ENCODE measurements at regions of chr9 and their contacts with region 1.

Region 1: GRCh38 chr9:121213136-121213806 is 11.6 kb upstream of the RAB14 start:
- DNase-seq: peak; percentile 74 to 93
- H3K4me3 ChIP-seq: no peak overlapping the region
- H3K27ac ChIP-seq: no peak overlapping the region
- H3K4me1 ChIP-seq: peaks cover 0 to 6% (median 1%) of the 10 kb centered on the region in 4 experiments; a peak in 3 of 7 replicates
- H3K27me3 ChIP-seq: no peaks in the 10 kb centered on the region
- CTCF ChIP-seq: peak; percentile 96 to 98 (median 98)
- EP300 ChIP-seq: no peak
- POLR2A ChIP-seq: no peak
- RAD21 ChIP-seq: peak; percentile 100

Region 2: GRCh38 chr9:121246821-121247561 is 33.7 kb after region 1 on chr9:
- CTCF ChIA-PET with region 1: interaction called, 14 read pairs
- POLR2A ChIA-PET with region 1: no interaction called
- DNase-seq: no peak
- H3K4me3 ChIP-seq: no peak overlapping the region
- H3K27ac ChIP-seq: no peak overlapping the region
- H3K4me1 ChIP-seq: no peaks in the 10 kb centered on the region
- H3K27me3 ChIP-seq: 0 out of 7 replicates have a peak, but pooled peaks cover 0 to under 1% (median 0%) of the 10 kb centered on the region in 4 experiments
- CTCF ChIP-seq: no peak
- EP300 ChIP-seq: no peak
- POLR2A ChIP-seq: no peak
- RAD21 ChIP-seq: no peak

Region 3: GRCh38 chr9:121278535-121279261 is 65.4 kb after region 1 on chr9:
- CTCF ChIA-PET with region 1: interaction called, 43 read pairs
- POLR2A ChIA-PET with region 1: interaction called, 3 read pairs
- DNase-seq: no peak
- H3K4me3 ChIP-seq: no peak overlapping the region
- H3K27ac ChIP-seq: no peak overlapping the region
- H3K4me1 ChIP-seq: peaks cover 0 to 5% (median 2%) of the 10 kb centered on the region in 4 experiments; a peak in 3 of 7 replicates
- H3K27me3 ChIP-seq: peaks cover 6 to 47% (median 39%) of the 10 kb centered on the region in 4 experiments
- CTCF ChIP-seq: peak; percentile 64 to 84 (median 66)
- EP300 ChIP-seq: no peak
- POLR2A ChIP-seq: no peak
- RAD21 ChIP-seq: peak; percentile 73 to 78

Region 4: GRCh38 chr9:121305269-121305994 is 92.2 kb after region 1 on chr9:
- CTCF ChIA-PET with region 1: interaction called, 37 read pairs
- POLR2A ChIA-PET with region 1: no interaction called
- DNase-seq: no peak
- H3K4me3 ChIP-seq: no peak overlapping the region
- H3K27ac ChIP-seq: no peak overlapping the region
- H3K4me1 ChIP-seq: peaks cover 2 to 10% (median 4%) of the 10 kb centered on the region in 4 experiments; a peak in 6 of 7 replicates
- H3K27me3 ChIP-seq: peaks cover 5 to 14% (median 9%) of the 10 kb centered on the region in 4 experiments
- CTCF ChIP-seq: no peak
- EP300 ChIP-seq: no peak
- POLR2A ChIP-seq: no peak
- RAD21 ChIP-seq: no peak

Region 5: GRCh38 chr9:121399883-121400607 is 186.8 kb after region 1 on chr9:
- CTCF ChIA-PET with region 1: interaction called, 70 read pairs
- POLR2A ChIA-PET with region 1: no interaction called
- DNase-seq: no peak
- H3K4me3 ChIP-seq: no peak overlapping the region
- H3K27ac ChIP-seq: no peak overlapping the region
- H3K4me1 ChIP-seq: peaks cover 0 to 6% (median 0%) of the 10 kb centered on the region in 4 experiments; a peak in 1 of 7 replicates
- H3K27me3 ChIP-seq: no peaks in the 10 kb centered on the region
- CTCF ChIP-seq: peak in 2 of 3 experiments; percentile 49 to 61; a peak in 2 of 4 replicates
- EP300 ChIP-seq: no peak
- POLR2A ChIP-seq: no peak
- RAD21 ChIP-seq: peak; percentile 77 to 84